ENCODE measurements at regions of chr12 and their contacts with region 1.

Region 1: DNA sequence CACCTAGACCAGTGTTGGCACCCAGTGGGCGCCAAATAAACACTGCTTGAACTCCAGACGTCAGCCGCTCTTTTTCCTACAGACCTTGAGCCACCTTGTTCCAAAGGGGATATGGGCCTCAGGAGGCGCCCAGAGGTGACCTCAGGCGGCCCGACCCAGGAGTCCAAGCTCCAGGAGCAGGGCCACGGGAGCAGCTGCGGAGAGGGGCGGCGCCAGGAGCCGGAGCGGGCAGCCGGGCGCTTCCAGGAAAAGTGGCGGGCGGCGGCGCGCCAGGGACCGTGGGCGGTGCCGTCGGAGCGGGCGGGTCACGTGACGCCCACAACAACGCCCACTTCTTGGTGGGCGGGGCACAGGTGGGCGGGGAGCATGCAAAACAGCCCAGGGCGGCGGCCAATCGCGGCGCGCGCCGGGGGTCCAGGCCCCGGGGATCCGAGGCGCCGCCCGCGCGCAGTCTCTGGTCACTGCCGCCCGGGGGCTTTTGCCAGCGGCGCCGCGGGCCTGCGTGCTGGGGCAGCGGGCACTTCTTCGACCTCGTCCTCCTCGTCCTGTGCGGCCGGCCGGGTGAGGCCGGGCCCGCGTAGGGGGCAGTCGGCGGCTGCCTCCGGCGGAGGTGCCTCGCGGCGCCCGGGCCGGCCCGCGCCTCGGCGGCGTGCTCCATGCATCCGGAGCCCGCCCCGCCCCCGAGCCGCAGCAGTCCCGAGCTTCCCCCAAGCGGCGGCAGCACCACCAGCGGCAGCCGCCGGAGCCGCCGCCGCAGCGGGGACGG is at the start of gene ORAI1:
- DNase-seq: peak; percentile 93 to 99 (median 97)
- ATAC-seq: peak; percentile 88
- H3K4me3 ChIP-seq: peak within 1 kb of the TSS; percentile 77
- H3K4me3 Mint-ChIP-seq: peak within 1 kb of the TSS; percentile 78 to 99 (median 94)
- H3K27ac ChIP-seq: peak within 1 kb of the TSS; percentile 97
- H3K27ac Mint-ChIP-seq: peak within 1 kb of the TSS; percentile 91 to 98 (median 95)
- H3K4me1 ChIP-seq: peaks cover 29 to 36% of the 10 kb centered on the region in 2 donors
- H3K4me1 Mint-ChIP-seq: peaks cover 32 to 49% (median 44%) of the 10 kb centered on the region in 7 donors
- H3K27me3 ChIP-seq: no peaks in the 10 kb centered on the region
- H3K27me3 Mint-ChIP-seq: no peaks in the 10 kb centered on the region
- total RNA-seq, gene ORAI1: 34.4 to 73.5 (median 50.6) TPM

Region 2: GRCh38 chr12:121399391-121400331 is 226.6 kb before region 1 on chr12 and contains the start of gene RNF34:
- CTCF ChIA-PET with region 1: no interaction called
- POLR2A ChIA-PET with region 1: no interaction called
- intact Hi-C with region 1: loop called in 1 of 2 experiments (anchors 2 kb)
- DNase-seq: peak; percentile 88 to 98 (median 97)
- ATAC-seq: peak; percentile 96
- H3K4me3 ChIP-seq: peak within 1 kb of the TSS; percentile 93
- H3K4me3 Mint-ChIP-seq: peak within 1 kb of the TSS; percentile 89 to 99 (median 94)
- H3K27ac ChIP-seq: peak within 1 kb of the TSS; percentile 91
- H3K27ac Mint-ChIP-seq: peak within 1 kb of the TSS; percentile 91 to 97 (median 94)
- H3K4me1 ChIP-seq: peaks cover 20 to 26% of the 10 kb centered on the region in 2 donors
- H3K4me1 Mint-ChIP-seq: peaks cover 29 to 52% (median 39%) of the 10 kb centered on the region in 7 donors
- H3K27me3 ChIP-seq: no peaks in the 10 kb centered on the region
- H3K27me3 Mint-ChIP-seq: no peaks in the 10 kb centered on the region
- total RNA-seq, gene RNF34: 61.1 to 98.4 (median 81.7) TPM

Region 3: DNA sequence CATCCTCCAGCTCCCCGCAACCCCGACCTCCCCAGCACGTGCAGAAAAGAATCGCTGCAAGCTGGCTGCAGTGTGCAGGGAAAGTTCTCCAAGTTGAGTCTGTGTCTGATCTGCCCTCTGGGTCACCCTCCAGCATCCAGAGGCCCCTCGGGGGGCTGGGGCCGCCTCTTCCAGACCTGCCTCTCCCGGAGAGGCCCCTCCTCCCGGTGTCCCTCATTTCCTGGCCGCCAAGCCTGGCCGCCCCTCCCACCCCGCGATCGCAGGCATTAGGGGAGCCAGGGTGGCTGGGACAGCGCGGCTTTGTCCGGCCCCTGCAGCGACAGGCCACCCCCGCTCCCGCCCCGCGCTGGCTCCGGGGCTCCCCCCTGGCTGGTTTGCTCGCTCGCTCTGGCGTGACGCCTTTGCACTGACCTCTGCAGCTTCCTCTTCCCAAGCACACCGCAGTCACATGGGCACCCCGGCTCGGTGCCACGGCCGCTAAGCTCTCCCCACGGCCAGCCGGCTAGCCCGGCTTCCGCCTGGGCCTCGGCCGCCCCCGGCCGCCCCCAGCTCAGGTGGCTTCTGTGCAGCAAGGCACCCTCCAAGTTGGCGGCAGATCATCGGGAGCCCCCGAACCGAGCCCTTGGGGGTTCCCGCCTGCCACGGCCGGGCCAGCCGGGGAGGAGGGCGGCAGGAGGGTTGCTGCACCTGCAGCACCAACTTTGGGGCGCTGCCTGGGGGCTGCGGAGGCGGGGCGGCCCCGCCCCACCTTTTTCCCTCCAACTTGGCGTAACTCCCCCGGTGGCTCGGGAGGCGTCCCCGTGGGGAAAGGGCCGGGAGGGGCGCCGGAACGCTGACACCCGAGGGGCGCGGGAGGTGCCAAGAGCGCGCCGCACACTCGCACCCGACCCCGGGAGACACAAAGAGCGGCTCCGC is 89.1 kb before region 1 on chr12:
- CTCF ChIA-PET with region 1: interaction called, 6 read pairs
- POLR2A ChIA-PET with region 1: interaction called, 4 read pairs
- intact Hi-C with region 1: loop called in 1 of 2 experiments (anchors 5 kb)
- DNase-seq: peak in 8 of 9 donors; percentile 20 to 70 (median 28)
- ATAC-seq: peak; percentile 51
- H3K4me3 ChIP-seq: peak overlapping the region; percentile 62
- H3K4me3 Mint-ChIP-seq: peak overlapping the region; percentile 51 to 91 (median 81)
- H3K27ac ChIP-seq: peak overlapping the region; percentile 74
- H3K27ac Mint-ChIP-seq: peak overlapping the region; percentile 43 to 97 (median 92)
- H3K4me1 ChIP-seq: peaks cover 29 to 36% of the 10 kb centered on the region in 2 donors
- H3K4me1 Mint-ChIP-seq: peaks cover 21 to 56% (median 44%) of the 10 kb centered on the region in 7 donors
- H3K27me3 ChIP-seq: no peaks in the 10 kb centered on the region
- H3K27me3 Mint-ChIP-seq: peaks cover 0 to 4% (median 0%) of the 10 kb centered on the region in 5 donors

Region 4: DNA sequence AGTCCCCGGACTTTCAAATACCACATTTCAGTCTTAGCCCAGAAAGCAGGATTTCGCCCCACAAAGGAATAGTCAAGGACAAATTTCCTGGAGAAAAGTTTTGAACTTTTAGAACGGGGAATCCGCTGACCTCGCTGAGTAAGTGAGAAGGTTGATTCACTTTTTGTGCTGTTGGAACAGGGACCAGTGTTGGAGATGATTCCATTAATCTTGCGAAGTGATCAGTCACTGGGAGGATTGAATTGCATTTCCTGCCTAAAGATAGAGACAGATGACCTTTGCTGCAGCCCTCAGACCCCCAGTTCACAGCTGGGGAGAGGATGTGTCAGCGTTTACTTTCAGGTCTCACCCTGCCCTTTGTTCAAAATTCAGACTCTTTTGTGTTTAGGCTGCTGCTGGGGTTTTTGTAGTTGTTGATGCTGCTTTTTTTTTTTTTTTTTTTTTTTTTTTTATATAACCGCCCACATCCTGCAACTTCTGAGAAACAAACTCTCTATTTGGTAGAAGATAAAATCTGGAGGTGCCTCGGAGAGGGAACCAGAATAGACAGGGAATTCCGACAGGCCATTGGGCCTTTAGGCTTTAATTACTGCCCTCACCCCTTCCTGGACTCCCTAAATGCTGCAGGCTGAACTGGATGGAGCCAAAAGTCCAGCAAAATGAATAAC is 35.7 kb before region 1 on chr12:
- CTCF ChIA-PET with region 1: interaction called, 3 read pairs
- POLR2A ChIA-PET with region 1: interaction called, 34 read pairs
- intact Hi-C with region 1: loop called (anchors 1 kb)
- DNase-seq: peak; percentile 38 to 88 (median 83)
- ATAC-seq: peak; percentile 81
- H3K4me3 ChIP-seq: peak overlapping the region; percentile 76
- H3K4me3 Mint-ChIP-seq: peak overlapping the region; percentile 59 to 94 (median 90)
- H3K27ac ChIP-seq: peak overlapping the region; percentile 90
- H3K27ac Mint-ChIP-seq: peak overlapping the region; percentile 97 to 100 (median 99)
- H3K4me1 ChIP-seq: peaks cover 24 to 26% of the 10 kb centered on the region in 2 donors
- H3K4me1 Mint-ChIP-seq: peaks cover 16 to 53% (median 38%) of the 10 kb centered on the region in 7 donors
- H3K27me3 ChIP-seq: no peaks in the 10 kb centered on the region
- H3K27me3 Mint-ChIP-seq: peaks cover 0 to 3% (median 0%) of the 10 kb centered on the region in 5 donors

Region 5: GRCh38 chr12:121668750-121669520 is 42.7 kb after region 1 on chr12:
- CTCF ChIA-PET with region 1: interaction called, 150 read pairs
- POLR2A ChIA-PET with region 1: interaction called, 203 read pairs
- intact Hi-C with region 1: loop called (anchors 1 kb)
- DNase-seq: peak in 7 of 9 donors; percentile 32 to 66 (median 56)
- ATAC-seq: no peak
- H3K4me3 ChIP-seq: no peak overlapping the region
- H3K4me3 Mint-ChIP-seq: peak overlapping the region in 9 of 10 donors; percentile 34 to 62 (median 54)
- H3K27ac ChIP-seq: peak overlapping the region; percentile 36
- H3K27ac Mint-ChIP-seq: peak overlapping the region; percentile 49 to 93 (median 75)
- H3K4me1 ChIP-seq: peaks cover 16 to 53% of the 10 kb centered on the region in 2 donors
- H3K4me1 Mint-ChIP-seq: peaks cover 44 to 71% (median 57%) of the 10 kb centered on the region in 7 donors
- H3K27me3 ChIP-seq: no peaks in the 10 kb centered on the region
- H3K27me3 Mint-ChIP-seq: no peaks in the 10 kb centered on the region

Region 6: GRCh38 chr12:121793838-121794533 is 167.7 kb after region 1 on chr12:
- CTCF ChIA-PET with region 1: no interaction called
- POLR2A ChIA-PET with region 1: interaction called, 5 read pairs
- intact Hi-C with region 1: loop called (anchors 2 to 5 kb)
- DNase-seq: peak; percentile 91 to 98 (median 95)
- ATAC-seq: peak; percentile 77
- H3K4me3 ChIP-seq: peak overlapping the region; percentile 99
- H3K4me3 Mint-ChIP-seq: peak overlapping the region; percentile 84 to 99 (median 93)
- H3K27ac ChIP-seq: peak overlapping the region; percentile 96
- H3K27ac Mint-ChIP-seq: peak overlapping the region; percentile 85 to 99 (median 95)
- H3K4me1 ChIP-seq: peaks cover 44 to 50% of the 10 kb centered on the region in 2 donors
- H3K4me1 Mint-ChIP-seq: peaks cover 44 to 72% (median 59%) of the 10 kb centered on the region in 7 donors
- H3K27me3 ChIP-seq: no peaks in the 10 kb centered on the region
- H3K27me3 Mint-ChIP-seq: no peaks in the 10 kb centered on the region

Region 7: DNA sequence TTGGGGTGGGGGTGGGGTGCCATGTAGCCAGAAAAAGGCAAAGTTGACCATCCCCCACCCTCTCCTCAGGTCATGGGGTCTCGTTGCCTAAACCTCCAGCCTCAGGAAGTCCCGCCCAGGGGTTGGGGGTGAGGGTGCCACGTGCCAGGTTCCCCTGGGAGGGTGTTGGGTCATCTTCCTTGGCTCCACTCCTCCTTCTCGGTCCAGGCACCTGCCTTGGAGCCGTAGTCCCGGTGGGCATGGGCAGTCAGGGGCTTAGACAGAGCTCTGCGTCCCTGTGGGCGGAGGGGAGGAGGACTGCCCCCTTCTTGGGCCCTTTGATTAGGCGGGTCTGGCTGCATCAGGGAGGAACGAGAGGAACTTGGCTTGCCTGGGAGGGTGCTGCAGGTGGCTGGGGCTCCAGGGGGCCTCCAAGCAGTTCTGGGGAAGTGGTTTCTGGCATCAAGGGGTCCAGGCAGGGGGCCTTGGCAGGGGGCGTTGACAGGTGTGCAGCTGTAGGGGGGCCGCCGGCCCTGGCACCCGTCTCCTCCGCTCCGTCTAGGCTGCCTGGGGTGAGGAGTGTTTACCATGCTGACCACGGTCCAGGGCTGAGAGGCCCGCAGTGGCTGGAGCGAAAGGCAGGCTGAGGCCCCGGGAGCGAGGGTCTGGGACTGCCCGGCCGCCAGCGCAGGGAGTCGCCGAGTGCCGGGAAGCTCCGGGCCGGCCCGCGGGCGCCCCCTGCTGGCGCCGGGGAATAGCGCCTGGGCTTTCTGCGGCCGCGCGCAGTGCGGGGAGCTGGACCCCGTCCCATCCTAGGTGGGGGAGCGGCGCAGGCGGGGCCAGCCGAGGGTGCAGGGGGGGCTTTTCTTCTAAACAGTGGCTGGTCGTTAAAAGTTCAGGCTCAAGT is 185.4 kb after region 1 on chr12:
- CTCF ChIA-PET with region 1: no interaction called
- POLR2A ChIA-PET with region 1: no interaction called
- intact Hi-C with region 1: no loop called
- DNase-seq: peak in 8 of 9 donors; percentile 55 to 86 (median 75)
- ATAC-seq: peak; percentile 92
- H3K4me3 ChIP-seq: peak overlapping the region; percentile 74
- H3K4me3 Mint-ChIP-seq: peak overlapping the region; percentile 75 to 92 (median 84)
- H3K27ac ChIP-seq: peak overlapping the region; percentile 63
- H3K27ac Mint-ChIP-seq: peak overlapping the region; percentile 23 to 92 (median 75)
- H3K4me1 ChIP-seq: peaks cover 38 to 48% of the 10 kb centered on the region in 2 donors
- H3K4me1 Mint-ChIP-seq: peaks cover 29 to 69% (median 47%) of the 10 kb centered on the region in 7 donors
- H3K27me3 ChIP-seq: no peaks in the 10 kb centered on the region
- H3K27me3 Mint-ChIP-seq: no peaks in the 10 kb centered on the region

Measured in naive thymus-derived CD4-positive, alpha-beta T cell (primary cell).